ENCODE measurements at regions of chr6 and their contacts with region 1.

Region 1: GRCh38 chr6:141483598-141484061 is 649.1 kb upstream of the GJE1 start:
- DNase-seq: peak; percentile 70
- H3K4me3 Mint-ChIP-seq: peak overlapping the region; percentile 65
- H3K27ac Mint-ChIP-seq: peak overlapping the region; percentile 91
- H3K4me1 Mint-ChIP-seq: peaks cover 33% of the 10 kb centered on the region
- H3K27me3 Mint-ChIP-seq: no peaks in the 10 kb centered on the region

Region 2: GRCh38 chr6:140809694-140810101 is 673.9 kb before region 1 on chr6:
- CTCF ChIA-PET with region 1: no interaction called
- intact Hi-C with region 1: loop called (anchors 2 kb)
- DNase-seq: no peak
- H3K4me3 Mint-ChIP-seq: no peak overlapping the region
- H3K27ac Mint-ChIP-seq: no peak overlapping the region
- H3K4me1 Mint-ChIP-seq: peaks cover 5% of the 10 kb centered on the region
- H3K27me3 Mint-ChIP-seq: peaks cover 3% of the 10 kb centered on the region

Region 3: DNA sequence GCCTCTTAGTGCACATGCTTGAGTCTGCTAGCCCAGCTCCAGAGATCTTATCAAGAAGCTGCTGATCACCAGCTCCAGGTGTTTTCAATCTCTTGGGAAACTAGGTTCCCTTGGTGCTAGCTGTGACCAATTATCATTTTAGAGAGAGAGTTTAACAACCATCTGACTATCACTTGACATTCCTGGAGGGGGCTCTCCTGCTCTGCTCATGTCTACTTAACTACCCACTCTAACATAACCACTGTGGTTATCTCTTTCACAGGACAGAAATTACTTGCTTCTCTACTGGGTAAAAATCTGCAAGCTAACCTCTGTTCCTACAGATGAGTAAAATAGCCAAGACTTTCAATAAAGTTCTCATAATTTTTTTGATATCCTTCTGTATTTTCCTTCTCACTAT is 174.3 kb before region 1 on chr6:
- CTCF ChIA-PET with region 1: no interaction called
- intact Hi-C with region 1: loop called (anchors 5 kb)
- DNase-seq: peak; percentile 7
- H3K4me3 Mint-ChIP-seq: no peak overlapping the region
- H3K27ac Mint-ChIP-seq: no peak overlapping the region
- H3K4me1 Mint-ChIP-seq: peaks cover 11% of the 10 kb centered on the region
- H3K27me3 Mint-ChIP-seq: no peaks in the 10 kb centered on the region

Region 4: DNA sequence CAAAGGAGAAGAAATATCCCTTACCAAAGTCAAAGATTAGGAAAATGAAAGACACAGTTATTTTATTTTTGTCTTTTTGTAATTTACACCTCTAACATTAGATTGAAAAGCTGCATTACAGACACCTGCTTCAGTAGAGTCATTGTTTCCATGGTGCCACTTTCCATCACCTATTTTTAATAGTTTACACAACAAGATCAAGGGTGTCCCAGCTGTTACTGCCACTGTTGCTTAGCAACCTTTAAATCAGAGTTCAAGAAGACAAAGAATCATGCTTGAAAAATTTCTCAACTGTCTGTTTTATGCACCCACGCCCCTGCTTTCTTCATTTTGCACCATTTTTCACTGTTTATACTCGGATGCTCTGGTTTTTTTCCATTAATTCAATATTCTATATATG is 19.1 kb before region 1 on chr6:
- CTCF ChIA-PET with region 1: no interaction called
- intact Hi-C with region 1: loop called (anchors 1 kb)
- DNase-seq: no peak
- H3K4me3 Mint-ChIP-seq: no peak overlapping the region
- H3K27ac Mint-ChIP-seq: no peak overlapping the region
- H3K4me1 Mint-ChIP-seq: peaks cover 10% of the 10 kb centered on the region
- H3K27me3 Mint-ChIP-seq: no peaks in the 10 kb centered on the region

Region 5: GRCh38 chr6:142013286-142013685 is 529.7 kb after region 1 on chr6:
- CTCF ChIA-PET with region 1: no interaction called
- intact Hi-C with region 1: loop called (anchors 10 kb)
- DNase-seq: no peak
- H3K4me3 Mint-ChIP-seq: no peak overlapping the region
- H3K27ac Mint-ChIP-seq: no peak overlapping the region
- H3K4me1 Mint-ChIP-seq: peaks cover 14% of the 10 kb centered on the region
- H3K27me3 Mint-ChIP-seq: peaks cover 27% of the 10 kb centered on the region